Brain microvascular endothelial cell (primary cell): ENCODE measurements at regions of chr17 and their contacts with region 1.

Region 1: DNA sequence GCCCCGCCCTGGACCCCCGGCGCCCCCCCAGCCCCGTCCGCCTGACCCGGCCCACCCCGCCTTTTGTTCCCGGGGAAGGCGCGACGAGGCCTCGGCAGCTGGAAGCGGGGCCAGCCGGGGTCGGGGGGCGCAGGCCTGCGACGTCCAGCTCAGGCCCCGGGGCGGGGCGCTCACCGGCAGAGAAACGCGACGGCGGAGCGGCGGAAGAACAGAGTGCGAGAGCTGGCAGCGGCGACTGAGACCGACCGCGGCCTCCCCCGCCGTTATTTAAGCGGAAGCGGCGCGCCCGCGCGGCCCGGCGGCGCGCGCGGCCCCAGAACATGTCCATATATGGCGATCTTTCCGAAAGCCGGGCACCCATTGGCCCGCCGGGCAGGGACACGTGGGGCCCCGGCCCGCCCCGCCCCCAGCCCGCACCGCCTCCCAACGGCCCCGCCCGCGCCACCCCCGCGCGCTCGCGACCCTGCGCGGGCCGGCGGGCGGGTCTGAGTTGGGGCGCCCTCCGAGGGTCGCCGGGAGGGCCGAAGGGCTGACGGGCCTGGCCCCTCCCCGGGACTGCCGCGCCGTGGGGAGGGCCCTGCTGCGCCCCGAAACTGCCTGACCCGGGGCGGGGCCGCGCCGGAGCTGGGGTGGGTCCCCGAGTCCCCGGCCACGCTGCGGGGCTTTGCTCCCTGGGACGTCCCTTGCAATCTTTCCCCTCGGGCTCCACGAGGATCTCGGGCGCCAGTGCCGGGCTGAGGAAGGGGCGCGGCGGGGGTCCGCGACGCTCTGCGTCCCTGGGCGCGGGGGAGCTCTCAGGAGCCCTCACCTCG is at the start of gene ACTG1:
- DNase-seq: peak; percentile 87
- H3K4me3 ChIP-seq: peak within 1 kb of the TSS; percentile 97
- H3K27ac ChIP-seq: peak within 1 kb of the TSS; percentile 96
- H3K27me3 ChIP-seq: no peaks in the 10 kb centered on the region
- CTCF ChIP-seq: no peak

Region 2: GRCh38 chr17:81401723-81402529 is 110.8 kb before region 1 on chr17:
- in situ Hi-C with region 1: loop called (anchors 10 kb)
- DNase-seq: no peak
- H3K4me3 ChIP-seq: no peak overlapping the region
- H3K27ac ChIP-seq: peak overlapping the region; percentile 90
- H3K27me3 ChIP-seq: no peaks in the 10 kb centered on the region
- CTCF ChIP-seq: peak; percentile 65